Activated CD4-positive, alpha-beta T cell treated with anti-CD3 and anti-CD28 coated beads, Interleukin-2, amount 10 ng/mL, durations not matched to agents 24 days and 14 days (primary cell): ENCODE measurements at regions of chr9 and their contacts with region 1.

Region 1: GRCh38 chr9:72022841-72023240 is 37.6 kb downstream of the C9orf57 start:
- DNase-seq: no peak
- H3K4me3 Mint-ChIP-seq: no peak overlapping the region
- H3K27ac Mint-ChIP-seq: no peak overlapping the region
- H3K4me1 Mint-ChIP-seq: peaks cover 5% of the 10 kb centered on the region
- H3K27me3 Mint-ChIP-seq: no peaks in the 10 kb centered on the region

Region 2: GRCh38 chr9:70902692-70903131 is 1120.1 kb before region 1 on chr9:
- intact Hi-C with region 1: no loop called
- DNase-seq: no peak
- H3K4me3 Mint-ChIP-seq: no peak overlapping the region
- H3K27ac Mint-ChIP-seq: no peak overlapping the region
- H3K4me1 Mint-ChIP-seq: no peaks in the 10 kb centered on the region
- H3K27me3 Mint-ChIP-seq: peaks cover 2% of the 10 kb centered on the region

Region 3: DNA sequence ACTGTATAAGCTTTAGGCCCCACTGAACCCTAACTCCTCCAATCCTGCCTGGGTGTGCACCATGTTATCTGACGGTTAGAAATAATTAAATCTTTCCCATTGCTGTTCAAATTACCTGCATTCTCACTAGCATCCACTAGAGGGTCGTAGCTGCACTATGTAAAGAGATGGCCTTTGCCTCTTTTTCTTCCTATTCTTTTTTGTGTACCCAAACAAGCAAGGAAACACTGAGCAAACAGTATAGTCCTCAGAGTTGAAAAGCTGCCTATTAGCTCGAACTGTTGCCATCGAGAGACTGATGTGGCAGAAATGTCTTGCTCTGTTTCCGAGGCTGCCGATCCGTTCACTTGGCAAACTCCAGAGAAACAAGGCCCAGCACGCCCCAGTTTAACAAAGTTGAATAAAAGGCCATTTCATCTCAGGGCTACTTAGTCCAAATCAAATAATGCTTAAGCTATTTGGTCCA is 737.6 kb before region 1 on chr9:
- intact Hi-C with region 1: loop called (anchors 2 kb)
- DNase-seq: peak; percentile 77
- H3K4me3 Mint-ChIP-seq: no peak overlapping the region
- H3K27ac Mint-ChIP-seq: no peak overlapping the region
- H3K4me1 Mint-ChIP-seq: no peaks in the 10 kb centered on the region
- H3K27me3 Mint-ChIP-seq: no peaks in the 10 kb centered on the region

Region 4: DNA sequence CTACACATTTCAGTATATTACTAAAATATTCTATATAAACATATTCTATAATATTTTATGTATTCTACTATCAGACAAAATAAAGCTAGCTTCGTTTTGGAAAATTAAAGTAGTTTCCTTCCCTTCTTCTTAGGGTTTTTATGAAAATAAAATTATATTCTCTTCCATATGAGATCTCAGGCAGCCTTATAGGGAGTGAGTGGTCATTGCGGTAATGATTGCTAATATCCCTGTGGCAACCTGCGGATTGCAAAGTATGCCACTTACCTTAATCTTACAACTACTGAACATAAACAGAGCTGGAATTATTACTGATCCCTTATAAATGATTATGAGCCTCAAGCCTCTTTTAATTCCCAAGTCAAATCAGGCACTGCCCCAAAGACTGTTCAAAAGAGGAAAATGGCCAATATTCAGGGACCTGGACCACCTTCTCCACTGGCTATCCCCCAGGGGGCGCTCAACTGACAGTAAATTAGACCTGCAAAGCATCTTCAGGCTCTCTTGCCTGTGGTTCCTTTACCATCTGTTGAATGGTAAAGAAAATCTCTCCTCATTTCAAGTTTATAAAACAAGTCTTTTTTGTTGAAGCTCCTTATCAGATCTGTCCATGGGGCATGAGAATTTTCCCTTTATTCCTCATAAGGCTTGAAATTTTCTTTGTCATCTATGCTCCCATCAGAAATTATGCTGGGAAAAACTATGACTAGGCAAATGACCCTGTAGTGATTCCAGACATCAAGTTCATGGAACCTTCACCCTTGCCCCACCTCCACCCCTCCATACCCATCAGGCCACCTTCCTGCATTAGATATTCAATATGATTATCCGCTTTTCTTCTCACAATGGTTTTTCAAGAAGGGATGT is 418.4 kb before region 1 on chr9:
- intact Hi-C with region 1: loop called (anchors 10 kb)
- DNase-seq: peak; percentile 93
- H3K4me3 Mint-ChIP-seq: no peak overlapping the region
- H3K27ac Mint-ChIP-seq: no peak overlapping the region
- H3K4me1 Mint-ChIP-seq: no peaks in the 10 kb centered on the region
- H3K27me3 Mint-ChIP-seq: peaks cover 17% of the 10 kb centered on the region

Region 5: GRCh38 chr9:71801826-71802225 is 221.0 kb before region 1 on chr9:
- intact Hi-C with region 1: loop called (anchors 1 kb)
- DNase-seq: no peak
- H3K4me3 Mint-ChIP-seq: no peak overlapping the region
- H3K27ac Mint-ChIP-seq: no peak overlapping the region
- H3K4me1 Mint-ChIP-seq: peaks cover 3% of the 10 kb centered on the region
- H3K27me3 Mint-ChIP-seq: no peaks in the 10 kb centered on the region

Region 6: GRCh38 chr9:71806901-71807307 is 215.9 kb before region 1 on chr9:
- intact Hi-C with region 1: loop called (anchors 1 kb)
- DNase-seq: peak; percentile 90
- H3K4me3 Mint-ChIP-seq: no peak overlapping the region
- H3K27ac Mint-ChIP-seq: no peak overlapping the region
- H3K4me1 Mint-ChIP-seq: peaks cover 4% of the 10 kb centered on the region
- H3K27me3 Mint-ChIP-seq: peaks cover 3% of the 10 kb centered on the region